B cell (primary cell): ENCODE measurements at regions of chr1 and their contacts with region 1.

Region 1: GRCh38 chr1:6199298-6200187 is at the start of gene RPL22:
- DNase-seq: peak; percentile 98
- ATAC-seq: peak; percentile 93
- H3K4me3 ChIP-seq: peak within 1 kb of the TSS; percentile 75 to 99 (median 89)
- H3K4me3 Mint-ChIP-seq: peak within 1 kb of the TSS; percentile 90
- H3K27ac ChIP-seq: peak within 1 kb of the TSS; percentile 44 to 83
- H3K27ac Mint-ChIP-seq: peak within 1 kb of the TSS; percentile 96
- H3K4me1 ChIP-seq: peaks cover 23 to 24% of the 10 kb centered on the region in 2 donors
- H3K4me1 Mint-ChIP-seq: peaks cover 39% of the 10 kb centered on the region
- H3K27me3 ChIP-seq: peaks cover 0 to 3% (median under 1%) of the 10 kb centered on the region in 4 experiments
- H3K27me3 Mint-ChIP-seq: peaks cover 6% of the 10 kb centered on the region
- CTCF ChIP-seq: no peak
- total RNA-seq, gene RPL22: 444 and 471 TPM in 2 replicates

Region 2: GRCh38 chr1:5992026-5992813 is 207.3 kb before region 1 on chr1 and contains the start of gene NPHP4:
- CTCF ChIA-PET with region 1: no interaction called
- POLR2A ChIA-PET with region 1: no interaction called
- intact Hi-C with region 1: loop called (anchors 1 kb)
- DNase-seq: peak; percentile 99
- ATAC-seq: peak; percentile 90
- H3K4me3 ChIP-seq: peak within 1 kb of the TSS; percentile 31 to 91 (median 75)
- H3K4me3 Mint-ChIP-seq: peak within 1 kb of the TSS; percentile 98
- H3K27ac ChIP-seq: peak within 1 kb of the TSS; percentile 71 to 99
- H3K27ac Mint-ChIP-seq: peak within 1 kb of the TSS; percentile 95
- H3K4me1 ChIP-seq: peaks cover 28 to 33% of the 10 kb centered on the region in 2 donors
- H3K4me1 Mint-ChIP-seq: peaks cover 28% of the 10 kb centered on the region
- H3K27me3 ChIP-seq: no peaks in the 10 kb centered on the region
- H3K27me3 Mint-ChIP-seq: no peaks in the 10 kb centered on the region
- CTCF ChIP-seq: no peak
- total RNA-seq, gene NPHP4: 12.3 and 14.8 TPM in 2 replicates

Region 3: GRCh38 chr1:6235296-6235677 is 35.7 kb after region 1 on chr1:
- CTCF ChIA-PET with region 1: interaction called, 6 read pairs
- POLR2A ChIA-PET with region 1: no interaction called
- intact Hi-C with region 1: loop called (anchors 1 kb)
- DNase-seq: no peak
- ATAC-seq: no peak
- H3K4me3 ChIP-seq: peak overlapping the region in 4 of 5 experiments; percentile 47 to 84 (median 65)
- H3K4me3 Mint-ChIP-seq: peak overlapping the region; percentile 89
- H3K27ac ChIP-seq: no peak overlapping the region
- H3K27ac Mint-ChIP-seq: peak overlapping the region; percentile 71
- H3K4me1 ChIP-seq: peaks cover 9 to 15% of the 10 kb centered on the region in 2 donors
- H3K4me1 Mint-ChIP-seq: peaks cover 10% of the 10 kb centered on the region
- H3K27me3 ChIP-seq: peaks cover 0 to 17% (median 7%) of the 10 kb centered on the region in 4 experiments
- H3K27me3 Mint-ChIP-seq: peaks cover 14% of the 10 kb centered on the region
- CTCF ChIP-seq: no peak

Region 4: GRCh38 chr1:6347641-6348487 is 148.3 kb after region 1 on chr1:
- CTCF ChIA-PET with region 1: no interaction called
- POLR2A ChIA-PET with region 1: no interaction called
- intact Hi-C with region 1: no loop called
- DNase-seq: peak; percentile 65
- ATAC-seq: peak; percentile 58
- H3K4me3 ChIP-seq: no peak overlapping the region
- H3K4me3 Mint-ChIP-seq: peak overlapping the region; percentile 19
- H3K27ac ChIP-seq: no peak overlapping the region
- H3K27ac Mint-ChIP-seq: peak overlapping the region; percentile 59
- H3K4me1 ChIP-seq: peaks cover 2 to 10% of the 10 kb centered on the region in 2 donors
- H3K4me1 Mint-ChIP-seq: peaks cover 6% of the 10 kb centered on the region
- H3K27me3 ChIP-seq: no peaks in the 10 kb centered on the region
- H3K27me3 Mint-ChIP-seq: no peaks in the 10 kb centered on the region
- CTCF ChIP-seq: peak; percentile 73

Region 5: DNA sequence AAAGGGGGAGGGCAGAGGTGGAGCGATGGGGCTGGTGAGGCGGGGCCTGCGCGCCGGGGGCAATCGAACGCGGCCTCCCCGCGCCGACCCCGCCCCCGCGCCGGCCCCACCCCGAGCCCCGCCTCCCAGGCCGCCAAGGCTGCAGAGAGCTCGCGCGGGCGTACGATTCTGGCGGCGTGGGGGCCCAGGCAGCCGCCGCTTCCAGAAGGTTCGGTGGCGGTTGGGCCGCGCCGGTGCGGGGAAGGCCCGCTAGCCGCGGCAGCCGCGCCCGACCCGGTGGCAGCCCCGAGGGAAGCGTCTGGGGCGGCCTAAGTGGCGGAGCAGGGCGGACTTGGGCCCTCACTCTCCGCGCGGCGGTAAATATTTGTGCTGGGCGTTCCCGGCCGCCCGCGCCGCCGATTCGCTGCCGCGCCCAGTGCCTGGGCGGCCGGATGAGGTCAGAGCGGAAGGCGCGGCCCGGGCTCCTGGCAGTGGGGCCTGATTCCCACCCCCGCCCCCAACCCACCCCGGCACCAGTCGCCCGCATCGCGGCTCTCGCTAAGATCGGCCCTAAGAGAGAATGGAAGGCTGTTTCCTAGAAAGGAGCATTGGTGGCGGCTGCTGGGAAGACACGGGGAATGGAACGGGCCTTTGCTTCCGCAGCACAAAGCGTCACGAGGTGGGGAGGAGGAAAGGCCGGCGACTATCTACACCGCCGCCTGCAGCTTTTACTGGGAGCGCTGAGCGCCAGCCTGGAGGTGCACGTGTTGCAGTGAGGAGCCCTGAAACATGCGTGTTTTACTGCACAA is 194.1 kb after region 1 on chr1 and contains the start of gene ACOT7:
- CTCF ChIA-PET with region 1: no interaction called
- POLR2A ChIA-PET with region 1: no interaction called
- intact Hi-C with region 1: loop called (anchors 1 kb)
- DNase-seq: peak; percentile 94
- ATAC-seq: peak; percentile 90
- H3K4me3 ChIP-seq: peak within 1 kb of the TSS; percentile 51 to 80 (median 64)
- H3K4me3 Mint-ChIP-seq: peak within 1 kb of the TSS; percentile 92
- H3K27ac ChIP-seq: peak within 1 kb of the TSS; percentile 84
- H3K27ac Mint-ChIP-seq: peak within 1 kb of the TSS; percentile 97
- H3K4me1 ChIP-seq: peaks cover 15 to 20% of the 10 kb centered on the region in 2 donors
- H3K4me1 Mint-ChIP-seq: peaks cover 16% of the 10 kb centered on the region
- H3K27me3 ChIP-seq: peaks cover 0 to 15% (median 0%) of the 10 kb centered on the region in 4 experiments
- H3K27me3 Mint-ChIP-seq: no peaks in the 10 kb centered on the region
- CTCF ChIP-seq: no peak
- total RNA-seq, gene ACOT7: 4.0 and 4.2 TPM in 2 replicates

Region 6: DNA sequence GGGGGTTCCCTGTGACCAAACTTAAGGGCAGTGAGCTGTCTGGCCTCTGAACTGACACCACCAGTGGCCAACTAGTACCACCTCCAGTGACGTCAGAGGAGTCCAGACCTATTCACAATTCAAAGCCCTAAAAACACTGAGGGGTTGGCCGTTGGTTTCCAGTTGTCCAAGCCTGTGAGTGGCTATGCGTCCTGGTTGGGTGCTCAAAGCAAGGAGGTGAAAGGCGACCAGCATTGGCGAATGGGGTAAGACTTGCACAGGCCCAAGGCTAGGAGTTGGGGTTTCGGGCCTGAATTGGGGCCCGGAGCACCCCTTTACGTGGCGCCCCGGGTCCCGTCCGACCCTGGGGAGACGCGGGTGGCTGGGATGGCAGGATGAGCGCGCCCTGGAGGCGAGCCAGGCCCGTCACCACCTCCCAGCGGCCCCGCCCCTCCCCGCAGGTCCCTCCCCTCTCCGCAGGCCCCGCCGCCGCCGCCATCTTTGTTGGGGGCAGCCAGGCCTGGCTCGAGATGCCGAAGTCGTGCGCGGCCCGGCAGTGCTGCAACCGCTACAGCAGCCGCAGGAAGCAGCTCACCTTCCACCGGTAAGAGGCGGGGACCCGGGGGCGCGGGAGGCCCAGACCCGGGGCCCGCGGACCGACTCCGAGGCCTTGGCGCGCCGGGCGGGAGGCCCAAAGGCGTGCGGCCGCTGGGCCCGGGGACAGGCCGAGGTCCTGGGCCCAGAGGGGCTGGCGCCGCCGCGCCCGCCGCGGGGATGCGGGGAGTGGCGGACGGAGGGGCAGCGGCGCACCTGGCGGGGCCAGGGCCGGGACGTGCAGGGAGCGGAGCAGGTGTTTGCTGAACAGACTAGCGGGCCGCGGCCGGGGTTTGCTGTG is 425.4 kb after region 1 on chr1 and contains the start of gene THAP3:
- CTCF ChIA-PET with region 1: no interaction called
- POLR2A ChIA-PET with region 1: no interaction called
- intact Hi-C with region 1: loop called (anchors 1 kb)
- DNase-seq: peak; percentile 92
- ATAC-seq: peak; percentile 98
- H3K4me3 ChIP-seq: peak within 1 kb of the TSS; percentile 61 to 80 (median 62)
- H3K4me3 Mint-ChIP-seq: peak within 1 kb of the TSS; percentile 93
- H3K27ac ChIP-seq: peak within 1 kb of the TSS in 1 of 2 donors; percentile 27
- H3K27ac Mint-ChIP-seq: peak within 1 kb of the TSS; percentile 81
- H3K4me1 ChIP-seq: peaks cover 13 to 32% of the 10 kb centered on the region in 2 donors
- H3K4me1 Mint-ChIP-seq: peaks cover 31% of the 10 kb centered on the region
- H3K27me3 ChIP-seq: no peaks in the 10 kb centered on the region
- H3K27me3 Mint-ChIP-seq: no peaks in the 10 kb centered on the region
- CTCF ChIP-seq: peak; percentile 57
- total RNA-seq, gene THAP3: 24.6 and 30.4 TPM in 2 replicates

Region 7: GRCh38 chr1:6784560-6785317 is 585.2 kb after region 1 on chr1:
- CTCF ChIA-PET with region 1: no interaction called
- POLR2A ChIA-PET with region 1: no interaction called
- intact Hi-C with region 1: loop called (anchors 10 kb)
- DNase-seq: peak; percentile 100
- ATAC-seq: peak; percentile 78
- H3K4me3 ChIP-seq: peak overlapping the region; percentile 66 to 84 (median 77)
- H3K4me3 Mint-ChIP-seq: peak overlapping the region; percentile 95
- H3K27ac ChIP-seq: peak overlapping the region; percentile 87 to 99
- H3K27ac Mint-ChIP-seq: peak overlapping the region; percentile 97
- H3K4me1 ChIP-seq: peaks cover 15 to 18% of the 10 kb centered on the region in 2 donors
- H3K4me1 Mint-ChIP-seq: peaks cover 51% of the 10 kb centered on the region
- H3K27me3 ChIP-seq: no peaks in the 10 kb centered on the region
- H3K27me3 Mint-ChIP-seq: no peaks in the 10 kb centered on the region
- CTCF ChIP-seq: no peak